PC-9 (cell line): ENCODE measurements at regions of chr10 and their contacts with region 1.

Region 1: DNA sequence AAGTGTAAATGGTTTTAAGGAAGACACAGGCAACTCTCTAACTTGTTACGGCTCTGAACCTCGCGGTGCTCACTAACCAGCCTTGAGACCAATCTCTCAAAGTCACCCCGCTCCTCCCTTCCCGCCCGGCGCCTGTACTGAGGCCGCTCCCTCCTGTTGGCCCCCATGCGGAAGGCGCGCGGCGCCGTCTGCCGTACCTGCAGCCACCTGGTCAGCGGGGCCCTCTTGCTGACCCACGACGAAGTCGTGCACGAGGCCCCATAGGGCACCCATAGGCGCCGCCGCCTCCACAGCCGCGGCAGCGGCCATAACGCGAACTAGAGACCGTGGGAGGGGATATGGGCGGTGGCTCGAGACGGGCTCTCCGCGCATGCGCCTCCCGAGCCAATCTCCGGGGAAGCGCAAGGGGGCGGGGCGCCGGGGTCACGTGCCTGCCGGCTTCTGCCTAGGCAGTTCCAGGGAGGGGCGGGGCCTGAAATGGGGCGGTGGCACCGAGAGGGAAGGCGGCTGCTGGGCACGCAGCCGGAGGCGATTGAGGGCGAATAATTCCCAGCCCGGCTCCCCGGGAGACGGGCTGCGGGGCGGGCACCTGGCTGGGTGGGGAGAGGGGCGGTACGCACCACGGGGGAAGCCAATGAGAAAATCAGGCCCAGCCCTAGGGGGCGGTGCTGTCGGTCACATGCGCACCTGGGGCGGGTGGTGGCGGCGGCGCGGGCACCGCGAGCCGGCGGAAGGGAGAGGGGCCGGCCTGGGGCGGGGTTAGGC is at the start of gene MMS19:
- DNase-seq: peak; percentile 88 to 98
- H3K4me3 ChIP-seq: peak within 1 kb of the TSS; percentile 82
- H3K27ac ChIP-seq: peak within 1 kb of the TSS; percentile 77
- H3K4me1 ChIP-seq: peaks cover 18% of the 10 kb centered on the region
- H3K27me3 ChIP-seq: no peaks in the 10 kb centered on the region
- CTCF ChIP-seq: no peak
- total RNA-seq, gene MMS19: 42.4 and 42.7 TPM in 2 replicates

Region 2: DNA sequence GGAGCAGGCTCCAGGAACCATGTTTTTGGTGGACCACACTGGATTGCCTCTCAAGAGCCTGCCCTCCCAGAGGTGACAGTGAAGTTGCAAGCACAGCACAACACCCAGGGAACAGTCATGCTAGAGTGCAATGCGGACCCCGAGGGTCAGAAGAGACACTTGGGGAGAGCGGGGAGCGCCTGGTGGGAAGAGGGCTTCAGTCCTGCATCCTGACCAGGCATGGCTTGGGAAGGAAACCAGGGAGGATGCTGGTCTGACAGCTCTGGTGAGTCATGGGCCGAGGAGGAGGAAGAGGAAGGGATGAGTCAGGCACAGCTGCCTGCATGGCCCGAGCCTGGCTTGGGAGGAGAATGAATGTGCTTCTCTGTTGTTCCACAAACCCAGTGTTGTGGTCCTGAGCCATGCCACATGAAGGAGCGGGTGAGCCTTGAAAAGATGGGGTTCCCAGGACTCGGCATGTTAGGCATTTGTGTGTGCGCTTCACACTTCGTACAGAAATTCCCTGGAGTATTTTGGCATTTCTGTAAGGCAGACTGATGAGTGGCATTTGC is 44.8 kb after region 1 on chr10:
- CTCF ChIA-PET with region 1: no interaction called
- POLR2A ChIA-PET with region 1: no interaction called
- intact Hi-C with region 1: loop called (anchors 2 kb)
- DNase-seq: peak; percentile 74 to 83
- H3K4me3 ChIP-seq: peak overlapping the region; percentile 10; the same call in 1 of the 2 replicates
- H3K27ac ChIP-seq: peak overlapping the region; percentile 80
- H3K4me1 ChIP-seq: peaks cover 50% of the 10 kb centered on the region
- H3K27me3 ChIP-seq: no peaks in the 10 kb centered on the region
- CTCF ChIP-seq: no peak

Region 3: GRCh38 chr10:97612386-97612785 is 114.1 kb after region 1 on chr10:
- CTCF ChIA-PET with region 1: no interaction called
- POLR2A ChIA-PET with region 1: no interaction called
- intact Hi-C with region 1: loop called (anchors 1 kb)
- DNase-seq: peak; percentile 10 to 51
- H3K4me3 ChIP-seq: no peak overlapping the region
- H3K27ac ChIP-seq: no peak overlapping the region
- H3K4me1 ChIP-seq: no peaks in the 10 kb centered on the region
- H3K27me3 ChIP-seq: no peaks in the 10 kb centered on the region
- CTCF ChIP-seq: peak; percentile 67

Region 4: DNA sequence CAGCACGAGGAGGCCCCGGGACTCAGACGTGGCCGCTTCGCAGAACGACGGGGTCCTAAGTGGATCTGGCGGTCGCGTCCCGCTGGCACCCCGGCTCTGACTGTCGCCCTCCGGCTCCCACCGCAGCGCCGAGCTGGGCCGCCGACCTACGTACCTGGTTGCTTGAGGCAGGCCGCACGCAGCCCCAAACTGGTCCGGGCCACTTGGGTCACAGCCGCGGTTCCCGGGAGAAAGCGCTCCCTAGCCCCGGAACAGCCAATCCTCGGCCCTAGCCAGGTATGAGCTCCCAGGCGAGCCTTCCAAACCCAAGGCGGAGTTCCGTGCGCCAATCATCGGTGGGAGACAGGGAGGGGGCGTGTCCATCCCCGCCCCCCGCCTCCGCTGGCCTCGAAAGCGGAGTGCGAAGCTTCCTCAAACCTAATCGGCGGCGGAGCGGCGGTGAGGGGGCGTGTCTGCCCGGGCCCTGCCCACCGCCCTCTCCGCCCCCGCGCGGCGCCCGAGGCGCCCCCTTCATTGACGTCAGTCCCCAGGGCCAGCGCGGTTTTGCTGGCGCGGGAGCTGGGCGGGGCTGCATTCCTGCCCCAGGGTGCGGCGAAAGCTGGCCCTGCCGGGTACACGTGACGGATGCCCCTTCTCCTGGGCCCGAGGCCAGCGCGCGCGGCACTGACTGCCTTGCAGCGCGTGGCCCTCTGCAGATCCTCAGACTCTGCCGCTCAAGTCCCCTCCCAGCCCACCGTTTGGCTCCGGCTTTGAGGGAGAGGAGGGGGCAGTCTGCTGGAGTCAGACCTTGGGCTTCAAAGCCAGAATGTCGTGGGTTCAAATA is 188.9 kb after region 1 on chr10 and contains the start of gene AVPI1:
- CTCF ChIA-PET with region 1: no interaction called
- POLR2A ChIA-PET with region 1: no interaction called
- intact Hi-C with region 1: loop called (anchors 2 kb)
- DNase-seq: peak; percentile 91 to 97
- H3K4me3 ChIP-seq: peak within 1 kb of the TSS; percentile 81
- H3K27ac ChIP-seq: peak within 1 kb of the TSS; percentile 71
- H3K4me1 ChIP-seq: peaks cover 54% of the 10 kb centered on the region
- H3K27me3 ChIP-seq: no peaks in the 10 kb centered on the region
- CTCF ChIP-seq: no peak
- total RNA-seq, gene AVPI1: 20.5 and 22.4 TPM in 2 replicates

Region 5: GRCh38 chr10:97898429-97898828 is 400.2 kb after region 1 on chr10:
- CTCF ChIA-PET with region 1: no interaction called
- POLR2A ChIA-PET with region 1: no interaction called
- intact Hi-C with region 1: no loop called
- DNase-seq: no peak
- H3K4me3 ChIP-seq: no peak overlapping the region
- H3K27ac ChIP-seq: no peak overlapping the region
- H3K4me1 ChIP-seq: no peaks in the 10 kb centered on the region
- H3K27me3 ChIP-seq: no peaks in the 10 kb centered on the region
- CTCF ChIP-seq: no peak

Region 6: GRCh38 chr10:98269072-98269912 is 771.0 kb after region 1 on chr10:
- CTCF ChIA-PET with region 1: no interaction called
- POLR2A ChIA-PET with region 1: interaction called, 12 read pairs
- intact Hi-C with region 1: no loop called
- DNase-seq: peak; percentile 88 to 91
- H3K4me3 ChIP-seq: peak overlapping the region; percentile 53; the same call in 1 of the 2 replicates
- H3K27ac ChIP-seq: peak overlapping the region; percentile 68
- H3K4me1 ChIP-seq: peaks cover 51% of the 10 kb centered on the region
- H3K27me3 ChIP-seq: no peaks in the 10 kb centered on the region
- CTCF ChIP-seq: no peak